HCT116 (cell line): ENCODE measurements at regions of chr1 and their contacts with region 1.

Region 1: DNA sequence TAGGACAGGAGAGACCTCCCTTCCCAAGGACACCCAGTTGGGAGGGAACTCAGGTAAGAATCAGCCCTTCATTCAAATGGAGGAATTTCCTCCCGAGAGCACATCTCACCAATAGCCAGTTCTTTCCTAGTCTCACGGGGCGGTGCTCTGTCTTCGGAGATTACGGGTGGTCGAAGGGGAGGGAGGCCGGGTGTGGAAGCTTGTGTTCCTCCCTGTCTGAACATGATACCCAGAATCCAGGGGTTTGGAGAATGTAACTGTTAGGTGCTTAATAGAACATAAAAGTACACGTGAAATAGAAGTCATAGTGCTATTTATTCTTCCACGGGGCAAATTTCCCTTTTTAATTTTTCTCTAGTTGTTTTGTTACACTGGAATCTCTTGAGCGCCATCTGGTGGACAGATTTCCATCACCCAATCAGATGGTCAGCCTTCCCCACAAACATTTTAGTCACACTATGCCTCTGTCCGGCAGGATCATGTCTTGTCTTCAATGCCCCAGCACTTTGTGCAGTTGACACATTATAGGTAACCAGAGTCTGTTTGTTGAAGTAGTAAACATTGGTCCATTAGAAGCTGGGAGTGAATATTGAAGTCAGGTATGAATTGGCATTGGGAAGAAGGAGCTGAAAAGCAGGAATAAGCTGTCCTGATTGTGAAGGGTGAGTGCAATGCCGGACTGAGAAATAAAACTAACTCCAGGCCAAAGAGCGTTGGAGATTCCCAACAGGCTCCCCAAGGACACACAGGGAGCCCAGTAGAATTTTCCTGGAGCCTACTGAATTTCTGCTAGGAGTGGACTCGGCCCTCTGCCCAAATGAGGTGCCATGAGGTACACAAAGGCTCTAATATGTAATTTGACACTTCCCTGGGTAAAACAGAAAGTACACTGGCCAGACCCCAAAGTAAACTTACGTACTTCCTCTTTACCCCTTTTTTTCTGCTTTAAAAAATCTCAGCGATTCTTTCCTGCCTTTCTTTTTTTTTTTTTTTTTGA is 27.6 kb upstream of the ZNF697 start:
- DNase-seq: peak; percentile 85
- ATAC-seq: peak; percentile 95
- H3K4me3 ChIP-seq: peak overlapping the region; percentile 32 to 49
- H3K27ac ChIP-seq: peak overlapping the region; percentile 26; the same call in 1 of the 2 replicates
- H3K4me1 ChIP-seq: peaks cover 10 to 25% of the 10 kb centered on the region in 2 experiments
- H3K27me3 ChIP-seq: no peaks in the 10 kb centered on the region
- CTCF ChIP-seq: peak; percentile 75 to 87 (median 75)
- POLR2A ChIP-seq: no peak
- RAD21 ChIP-seq: peak; percentile 67

Region 2: DNA sequence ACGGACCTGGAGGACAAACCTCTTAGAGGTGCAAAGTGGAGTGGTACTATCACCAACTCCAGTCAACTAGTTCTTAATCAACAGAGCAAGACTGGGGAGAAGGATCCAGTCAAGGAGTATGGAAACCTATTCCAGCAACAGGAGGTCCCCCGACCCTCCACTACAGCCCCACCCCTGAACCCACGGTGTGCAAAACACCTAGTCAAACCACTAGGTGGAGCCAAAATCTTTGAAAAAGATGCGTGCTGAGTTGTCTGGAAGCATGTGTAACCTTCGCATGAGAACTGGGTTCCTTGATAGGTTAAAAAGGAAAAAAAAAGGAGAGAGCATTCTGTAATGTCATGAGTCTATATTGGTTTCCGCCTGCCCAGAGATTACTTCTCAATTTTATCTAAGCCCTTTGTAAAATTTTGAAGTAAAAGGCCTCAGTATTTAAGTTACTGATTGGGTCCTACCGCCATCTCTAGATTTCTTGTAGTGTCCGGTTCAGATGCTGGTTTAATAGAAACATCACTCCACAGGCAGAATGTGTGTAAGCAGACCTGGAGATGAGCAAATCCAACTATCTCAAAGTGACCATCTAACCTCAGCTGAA is 389.0 kb before region 1 on chr1:
- CTCF ChIA-PET with region 1: no interaction called
- POLR2A ChIA-PET with region 1: no interaction called
- RAD21 ChIA-PET with region 1: no interaction called
- intact Hi-C with region 1: loop called (anchors 5 kb)
- DNase-seq: peak; percentile 31
- ATAC-seq: peak; percentile 96
- H3K4me3 ChIP-seq: no peak overlapping the region
- H3K27ac ChIP-seq: no peak overlapping the region
- H3K4me1 ChIP-seq: no peaks in the 10 kb centered on the region
- H3K27me3 ChIP-seq: peaks cover 12% of the 10 kb centered on the region; the same call in 1 of the 2 replicates
- CTCF ChIP-seq: peak; percentile 54 to 79 (median 66); a peak in 5 of 6 replicates
- POLR2A ChIP-seq: no peak
- RAD21 ChIP-seq: peak; percentile 62

Region 3: DNA sequence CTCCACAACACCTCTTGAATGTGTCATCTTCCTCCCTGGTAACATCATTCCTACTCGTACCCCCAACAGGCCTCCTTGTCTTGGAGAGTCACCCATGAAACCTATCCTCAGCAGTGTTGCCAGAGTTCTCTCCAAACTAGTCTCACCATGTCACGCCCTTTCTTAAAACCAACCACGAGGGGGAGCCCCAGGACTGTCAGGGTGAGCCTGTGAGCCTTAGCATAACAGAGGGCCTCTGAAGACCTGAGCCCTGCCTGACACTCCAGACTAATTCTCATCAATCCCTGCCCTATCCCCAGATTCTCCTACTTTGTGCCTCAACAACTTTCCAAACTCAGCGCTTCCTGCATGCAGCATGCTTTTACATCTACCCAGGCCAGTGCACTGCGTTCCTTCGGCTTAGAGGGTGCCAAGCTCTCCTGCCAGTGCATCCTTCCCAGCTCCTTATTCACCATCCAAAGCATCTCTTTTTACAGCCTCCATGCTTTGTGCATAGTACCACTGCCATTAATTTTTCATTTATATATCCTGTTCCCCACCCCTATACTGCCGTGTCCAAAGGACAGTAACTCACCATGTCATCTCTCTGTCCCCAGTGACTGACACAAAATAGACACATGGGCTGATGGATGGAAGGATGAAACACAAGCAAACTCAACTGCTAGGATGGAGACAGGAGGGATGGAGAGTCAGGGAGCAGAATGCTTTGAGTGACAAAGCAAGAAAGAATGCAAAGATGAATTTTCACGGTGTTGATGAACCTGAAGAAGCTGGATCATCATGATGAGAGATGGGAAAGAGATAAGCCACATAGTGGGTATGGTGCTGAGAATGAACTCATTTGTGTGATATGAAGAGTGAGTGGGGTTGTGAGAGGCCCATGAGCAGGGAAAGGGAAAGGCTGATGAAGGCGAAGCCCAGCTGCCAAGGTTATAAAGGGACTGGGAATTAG is 61.6 kb before region 1 on chr1:
- CTCF ChIA-PET with region 1: interaction called, 53 read pairs
- POLR2A ChIA-PET with region 1: no interaction called
- RAD21 ChIA-PET with region 1: interaction called, 3 to 4 read pairs
- intact Hi-C with region 1: loop called (anchors 1 kb)
- DNase-seq: peak; percentile 68
- ATAC-seq: peak; percentile 88
- H3K4me3 ChIP-seq: no peak overlapping the region
- H3K27ac ChIP-seq: no peak overlapping the region
- H3K4me1 ChIP-seq: no peaks in the 10 kb centered on the region
- H3K27me3 ChIP-seq: no peaks in the 10 kb centered on the region
- CTCF ChIP-seq: peak; percentile 68 to 82 (median 81)
- POLR2A ChIP-seq: no peak
- RAD21 ChIP-seq: peak; percentile 88

Region 4: GRCh38 chr1:119653839-119654170 is 21.8 kb before region 1 on chr1:
- CTCF ChIA-PET with region 1: interaction called, 69 read pairs
- POLR2A ChIA-PET with region 1: interaction called, 3 read pairs
- RAD21 ChIA-PET with region 1: no interaction called
- intact Hi-C with region 1: no loop called
- DNase-seq: no peak
- ATAC-seq: no peak
- H3K4me3 ChIP-seq: no peak overlapping the region
- H3K27ac ChIP-seq: no peak overlapping the region
- H3K4me1 ChIP-seq: peaks cover 2 to 4% of the 10 kb centered on the region in 2 experiments; a peak in 3 of 4 replicates
- H3K27me3 ChIP-seq: peaks cover 58% of the 10 kb centered on the region
- CTCF ChIP-seq: no peak
- POLR2A ChIP-seq: no peak
- RAD21 ChIP-seq: no peak

Region 5: GRCh38 chr1:119686649-119687048 is 11.0 kb after region 1 on chr1:
- CTCF ChIA-PET with region 1: interaction called, 14 read pairs
- POLR2A ChIA-PET with region 1: interaction called, 3 read pairs
- RAD21 ChIA-PET with region 1: no interaction called
- intact Hi-C with region 1: no loop called
- DNase-seq: no peak
- ATAC-seq: peak; percentile 36; the same call in 1 of the 2 replicates
- H3K4me3 ChIP-seq: no peak overlapping the region
- H3K27ac ChIP-seq: no peak overlapping the region
- H3K4me1 ChIP-seq: peaks cover 0 to 19% of the 10 kb centered on the region in 2 experiments; a peak in 3 of 4 replicates
- H3K27me3 ChIP-seq: no peaks in the 10 kb centered on the region
- CTCF ChIP-seq: no peak
- POLR2A ChIP-seq: no peak
- RAD21 ChIP-seq: no peak

Region 6: DNA sequence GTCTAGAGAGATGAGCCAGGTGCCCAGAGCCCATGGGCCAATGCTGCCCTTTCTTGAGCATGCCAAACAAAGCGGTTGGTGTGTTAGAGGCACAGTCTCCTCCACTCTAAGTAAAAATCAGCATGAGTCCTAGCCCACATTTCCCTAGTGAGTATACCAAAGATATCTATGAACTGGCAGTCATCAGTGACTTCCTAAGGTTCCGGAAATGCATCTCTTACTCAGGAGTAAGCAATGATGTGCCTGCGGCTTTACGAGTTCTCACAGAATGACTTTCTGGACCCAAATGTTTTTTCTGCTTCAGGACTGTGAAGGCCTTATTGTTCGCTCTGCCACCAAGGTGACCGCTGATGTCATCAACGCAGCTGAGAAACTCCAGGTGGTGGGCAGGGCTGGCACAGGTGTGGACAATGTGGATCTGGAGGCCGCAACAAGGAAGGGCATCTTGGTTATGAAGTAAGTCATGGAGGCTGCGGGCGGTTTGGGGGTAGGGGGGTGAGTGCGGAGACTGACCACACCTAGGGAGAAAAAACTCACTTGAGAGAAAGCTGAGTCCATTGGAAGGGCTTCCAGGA is 45.3 kb after region 1 on chr1:
- CTCF ChIA-PET with region 1: no interaction called
- POLR2A ChIA-PET with region 1: no interaction called
- RAD21 ChIA-PET with region 1: no interaction called
- intact Hi-C with region 1: no loop called
- DNase-seq: no peak
- ATAC-seq: no peak
- H3K4me3 ChIP-seq: no peak overlapping the region
- H3K27ac ChIP-seq: no peak overlapping the region
- H3K4me1 ChIP-seq: no peaks in the 10 kb centered on the region
- H3K27me3 ChIP-seq: no peaks in the 10 kb centered on the region
- CTCF ChIP-seq: no peak
- POLR2A ChIP-seq: no peak
- RAD21 ChIP-seq: no peak